Spleen (tissue), 13 donors: ENCODE measurements at regions of chr4 and their contacts with region 1.

Region 1: DNA sequence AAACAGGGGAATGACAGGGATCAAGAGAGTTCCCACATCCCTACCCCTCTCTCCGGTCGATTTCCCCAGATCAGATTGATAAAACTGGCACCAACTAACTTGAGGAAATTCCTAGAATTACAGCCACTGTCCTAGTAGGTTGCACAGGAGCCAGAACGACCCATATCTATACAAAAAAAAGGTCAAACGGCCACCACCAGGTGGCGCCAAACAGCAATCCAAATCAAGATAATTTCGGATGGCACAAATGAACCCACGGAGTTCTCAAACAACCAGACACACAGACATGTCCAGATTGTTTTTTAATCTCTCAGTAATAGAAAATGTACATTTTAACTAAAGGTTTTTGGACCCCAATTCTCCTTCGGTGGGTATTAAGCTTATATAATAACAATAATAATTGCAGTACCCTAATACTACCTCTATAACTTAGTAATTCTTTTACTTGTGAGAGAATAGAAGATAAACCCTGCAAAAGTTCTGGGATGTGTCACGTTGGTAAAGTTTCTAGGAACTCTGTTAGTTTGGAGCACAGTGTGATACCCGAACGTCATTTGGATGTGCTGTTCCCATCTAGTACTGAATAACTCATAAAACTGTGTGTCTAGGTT is 212.6 kb downstream of the SPOCK3 start:
- DNase-seq: peak; percentile 74
- H3K4me3 ChIP-seq: no peak overlapping the region
- H3K27ac ChIP-seq: no peak overlapping the region
- H3K4me1 ChIP-seq: no peaks in the 10 kb centered on the region
- H3K27me3 ChIP-seq: no peaks in the 10 kb centered on the region
- CTCF ChIP-seq: peak; percentile 7 to 76 (median 50)
- POLR2A ChIP-seq: no peak

Region 2: DNA sequence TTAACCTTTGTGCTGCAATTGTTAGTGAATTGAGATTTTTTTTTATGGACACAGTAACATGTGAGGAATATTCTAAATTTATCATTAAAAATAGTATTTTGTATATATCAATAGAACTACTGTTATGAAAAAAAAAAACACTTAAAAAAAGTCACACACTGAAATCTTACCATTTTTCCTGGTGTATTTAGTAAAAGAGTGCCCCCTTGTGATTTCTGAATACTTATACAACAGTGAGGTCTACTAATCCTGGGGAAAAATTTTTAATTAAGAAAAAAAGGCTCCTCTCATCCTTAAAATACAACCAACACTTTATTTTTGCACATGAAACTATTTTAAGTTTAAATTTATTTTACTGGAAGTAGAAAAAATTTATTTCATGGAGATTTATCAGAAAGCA is 269.0 kb after region 1 on chr4:
- intact Hi-C with region 1: loop called (anchors 5 kb)
- DNase-seq: no peak
- H3K4me3 ChIP-seq: no peak overlapping the region
- H3K27ac ChIP-seq: no peak overlapping the region
- H3K4me1 ChIP-seq: no peaks in the 10 kb centered on the region
- H3K27me3 ChIP-seq: no peaks in the 10 kb centered on the region
- CTCF ChIP-seq: peak in 3 of 11 experiments; percentile 21 to 28 (median 26)
- POLR2A ChIP-seq: no peak

Region 3: GRCh38 chr4:168076989-168077725 is 1055.5 kb after region 1 on chr4:
- intact Hi-C with region 1: loop called (anchors 10 kb)
- DNase-seq: no peak
- H3K4me3 ChIP-seq: no peak overlapping the region
- H3K27ac ChIP-seq: no peak overlapping the region
- H3K4me1 ChIP-seq: no peaks in the 10 kb centered on the region
- H3K27me3 ChIP-seq: no peaks in the 10 kb centered on the region
- CTCF ChIP-seq: peak in 9 of 11 experiments; percentile 23 to 68 (median 52)
- POLR2A ChIP-seq: no peak